Activated CD8-positive, alpha-beta T cell treated with anti-CD3 and anti-CD28 coated beads, Interleukin-2, amount 10 ng/mL, durations not matched to agents 7 days and 5 days (primary cell): ENCODE measurements at regions of chr2 and their contacts with region 1.

Region 1: DNA sequence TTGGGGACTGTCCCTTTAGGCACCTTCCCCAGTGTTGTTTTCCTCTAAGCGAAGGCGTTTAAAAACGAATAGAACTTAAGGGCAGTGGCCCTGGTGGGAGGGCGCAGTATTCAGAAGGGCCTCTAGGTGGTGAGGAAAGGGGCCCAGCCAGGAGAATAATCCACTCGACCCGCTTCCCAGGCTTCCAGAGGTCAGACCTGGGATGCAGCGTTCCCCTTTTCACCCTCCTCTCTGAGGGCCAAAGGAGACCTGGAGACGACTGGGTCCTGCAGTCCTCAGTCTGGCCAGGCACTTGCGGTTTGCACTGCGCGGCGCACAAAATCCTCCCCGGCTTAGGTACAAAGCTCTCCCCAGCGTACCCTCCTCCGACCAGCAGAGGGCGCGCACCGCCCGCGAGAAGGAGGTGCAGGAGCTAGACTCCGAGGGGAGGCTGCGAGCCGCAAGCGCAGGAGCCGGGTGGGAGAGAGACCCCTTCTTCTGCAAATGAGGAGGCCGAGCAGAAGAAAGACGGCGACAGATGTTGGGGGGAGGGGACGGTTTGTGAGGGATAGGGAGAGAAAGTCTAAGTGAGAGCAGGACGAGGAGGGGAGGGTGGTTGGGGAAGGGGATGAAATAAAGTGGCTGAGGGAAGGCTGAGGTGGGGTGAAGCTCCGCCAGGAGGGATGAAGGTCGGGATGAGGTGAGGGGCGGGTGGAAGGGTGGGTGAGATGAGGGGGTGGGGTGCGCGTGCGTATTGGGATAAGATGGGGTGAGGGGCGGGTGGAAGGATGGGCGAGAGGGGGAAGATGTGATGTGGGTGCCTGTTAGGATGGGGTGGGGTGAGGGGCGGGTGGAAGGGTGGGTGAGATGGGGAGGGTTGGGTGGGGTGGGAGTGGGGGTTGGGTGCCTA is 4.9 kb downstream of the FEV start:
- DNase-seq: peak; percentile 87
- ATAC-seq: peak; percentile 92
- H3K4me3 Mint-ChIP-seq: no peak overlapping the region
- H3K27ac Mint-ChIP-seq: no peak overlapping the region
- H3K4me1 Mint-ChIP-seq: peaks cover 26% of the 10 kb centered on the region
- H3K27me3 Mint-ChIP-seq: peaks cover 64% of the 10 kb centered on the region

Region 2: DNA sequence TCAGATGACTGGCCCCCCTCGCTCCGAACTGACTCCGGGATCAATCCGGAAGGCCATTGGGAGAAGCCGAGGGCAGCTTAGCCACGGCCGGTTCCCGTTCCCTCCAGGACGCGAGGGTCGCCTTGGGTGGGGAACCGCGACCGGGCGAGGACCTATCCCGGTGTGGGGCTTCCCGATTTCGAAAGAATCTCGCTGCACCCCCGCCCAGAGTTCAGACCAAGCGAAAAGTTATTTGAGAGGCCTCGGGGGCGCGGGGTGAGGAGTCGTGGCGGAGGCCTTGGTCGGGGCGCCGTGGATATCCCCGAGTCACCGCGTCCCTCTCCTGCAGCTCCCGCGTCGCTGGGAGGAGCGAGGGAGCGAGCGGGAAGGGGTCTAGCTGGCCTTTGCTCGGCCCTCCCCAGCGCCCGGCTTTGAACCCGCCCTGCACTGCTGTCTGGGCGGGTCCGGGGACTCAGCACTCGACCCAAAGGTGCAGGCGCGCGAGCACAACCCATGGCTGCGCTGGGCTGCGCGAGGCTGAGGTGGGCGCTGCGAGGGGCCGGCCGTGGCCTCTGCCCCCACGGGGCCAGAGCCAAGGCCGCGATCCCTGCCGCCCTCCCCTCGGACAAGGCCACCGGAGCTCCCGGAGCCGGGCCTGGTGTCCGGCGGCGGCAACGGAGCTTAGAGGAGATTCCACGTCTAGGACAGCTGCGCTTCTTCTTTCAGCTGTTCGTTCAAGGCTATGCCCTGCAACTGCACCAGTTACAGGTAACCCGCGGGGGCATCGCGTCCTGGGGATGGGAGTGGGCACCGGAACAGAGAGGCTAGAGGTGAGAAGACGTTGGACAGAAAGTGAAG is 198.2 kb before region 1 on chr2 and contains the start of gene CYP27A1:
- CTCF ChIA-PET with region 1: no interaction called
- POLR2A ChIA-PET with region 1: no interaction called
- DNase-seq: no peak
- ATAC-seq: peak; percentile 67
- H3K4me3 Mint-ChIP-seq: no peak within 1 kb of the TSS
- H3K27ac Mint-ChIP-seq: no peak within 1 kb of the TSS
- H3K4me1 Mint-ChIP-seq: peaks cover 4% of the 10 kb centered on the region
- H3K27me3 Mint-ChIP-seq: peaks cover 50% of the 10 kb centered on the region
- total RNA-seq, gene CYP27A1: not detected

Region 3: GRCh38 chr2:218927422-218927821 is 52.7 kb before region 1 on chr2:
- CTCF ChIA-PET with region 1: no interaction called
- POLR2A ChIA-PET with region 1: no interaction called
- DNase-seq: no peak
- ATAC-seq: no peak
- H3K4me3 Mint-ChIP-seq: no peak overlapping the region
- H3K27ac Mint-ChIP-seq: no peak overlapping the region
- H3K4me1 Mint-ChIP-seq: no peaks in the 10 kb centered on the region
- H3K27me3 Mint-ChIP-seq: peaks cover 16% of the 10 kb centered on the region

Region 4: GRCh38 chr2:218962859-218963492 is 17.1 kb before region 1 on chr2:
- CTCF ChIA-PET with region 1: interaction called, 15 read pairs
- POLR2A ChIA-PET with region 1: no interaction called
- DNase-seq: peak; percentile 81
- ATAC-seq: peak; percentile 48
- H3K4me3 Mint-ChIP-seq: no peak overlapping the region
- H3K27ac Mint-ChIP-seq: no peak overlapping the region
- H3K4me1 Mint-ChIP-seq: peaks cover 7% of the 10 kb centered on the region
- H3K27me3 Mint-ChIP-seq: peaks cover 55% of the 10 kb centered on the region

Region 5: DNA sequence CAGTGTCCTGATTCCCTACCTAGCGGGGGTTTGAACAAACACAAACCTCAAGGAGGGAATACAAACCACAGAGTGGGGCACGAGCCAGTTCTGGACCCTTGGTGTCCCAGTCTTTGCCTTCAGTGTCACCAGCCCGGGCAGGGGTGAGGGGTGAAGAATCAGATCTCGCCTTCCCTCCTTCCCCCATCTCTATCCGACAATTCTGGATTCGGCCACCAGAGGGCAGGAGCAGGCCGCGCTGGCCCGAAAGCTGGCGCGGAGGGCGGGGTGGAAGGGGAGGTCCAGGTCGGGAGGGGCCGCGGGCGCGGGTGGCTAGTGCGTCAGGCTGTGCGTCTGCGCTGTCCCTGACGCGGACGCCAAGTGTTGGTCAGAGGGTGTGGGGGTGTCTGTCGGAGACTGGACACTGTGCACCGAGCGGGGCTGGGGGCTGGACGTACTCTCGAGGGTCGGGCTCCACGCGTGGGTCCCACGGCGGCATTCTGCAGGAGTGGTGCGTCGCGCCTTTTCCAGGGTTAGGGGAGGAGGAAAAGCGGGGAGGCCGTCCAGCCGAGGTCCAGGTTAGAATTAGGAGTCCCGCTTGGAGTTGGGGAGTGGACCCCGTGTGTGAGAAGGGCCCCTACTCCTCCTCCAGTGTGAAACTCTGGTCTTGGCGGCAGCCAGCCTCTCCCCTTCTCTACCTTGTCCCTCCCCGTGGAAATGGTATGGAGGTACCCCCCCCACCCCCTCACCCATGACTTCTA is 16.1 kb after region 1 on chr2:
- CTCF ChIA-PET with region 1: interaction called, 58 read pairs
- POLR2A ChIA-PET with region 1: no interaction called
- DNase-seq: peak; percentile 81
- ATAC-seq: peak; percentile 61
- H3K4me3 Mint-ChIP-seq: no peak overlapping the region
- H3K27ac Mint-ChIP-seq: no peak overlapping the region
- H3K4me1 Mint-ChIP-seq: peaks cover 8% of the 10 kb centered on the region
- H3K27me3 Mint-ChIP-seq: peaks cover 83% of the 10 kb centered on the region

Region 6: DNA sequence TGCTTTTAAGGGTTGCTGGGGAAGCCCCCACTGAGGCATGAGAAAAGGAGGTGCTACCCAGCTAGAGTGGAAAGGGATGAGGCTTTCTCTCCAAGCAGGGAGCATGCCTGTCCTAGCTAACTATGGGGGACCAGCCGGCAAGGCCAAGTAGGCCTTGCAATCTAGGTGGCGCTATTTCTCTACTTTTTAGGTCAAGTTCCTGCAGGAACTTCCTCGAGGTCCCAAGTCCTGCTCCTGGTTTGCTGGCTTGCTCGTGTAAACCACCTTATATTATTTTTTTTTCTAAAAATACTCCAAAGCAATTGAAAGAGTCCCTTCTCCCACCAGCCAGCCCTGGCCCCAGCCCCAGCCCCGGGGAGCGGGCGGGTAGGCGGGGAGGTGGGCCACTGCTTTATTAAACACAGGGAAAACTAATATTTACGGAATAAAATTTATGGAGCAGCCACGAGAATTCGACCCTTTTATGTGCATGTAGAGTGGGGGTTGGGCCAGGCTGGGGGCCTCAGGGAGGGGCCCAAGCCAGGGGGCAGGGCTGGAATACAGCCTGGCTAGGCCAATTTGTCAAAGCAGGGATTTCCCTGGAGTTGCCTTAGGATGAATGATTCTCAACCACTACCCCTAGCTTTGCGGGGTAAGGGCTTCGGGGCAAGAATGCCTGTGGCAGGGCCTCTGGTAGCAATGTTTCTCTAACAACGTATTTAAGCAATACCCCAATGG is 93.5 kb after region 1 on chr2:
- CTCF ChIA-PET with region 1: interaction called, 10 read pairs
- POLR2A ChIA-PET with region 1: no interaction called
- DNase-seq: peak; percentile 28
- ATAC-seq: peak; percentile 42
- H3K4me3 Mint-ChIP-seq: no peak overlapping the region
- H3K27ac Mint-ChIP-seq: no peak overlapping the region
- H3K4me1 Mint-ChIP-seq: no peaks in the 10 kb centered on the region
- H3K27me3 Mint-ChIP-seq: no peaks in the 10 kb centered on the region